Heart left ventricle (tissue), 16 donors: ENCODE measurements at regions of chr16 and their contacts with region 1.

Region 1: GRCh38 chr16:72124761-72125634 is 31.4 kb downstream of the DHX38 start:
- DNase-seq: peak; percentile 57 to 76 (median 70)
- ATAC-seq: peak; percentile 32 to 86 (median 84)
- H3K4me3 ChIP-seq: peak overlapping the region in 1 of 12 donors; percentile 27
- H3K27ac ChIP-seq: peak overlapping the region in 3 of 12 donors; percentile 22 to 80 (median 25)
- H3K4me1 ChIP-seq: peaks cover 0 to 22% (median 0%) of the 10 kb centered on the region in 12 donors
- H3K27me3 ChIP-seq: peaks cover 0 to 8% (median 0%) of the 10 kb centered on the region in 9 donors
- CTCF ChIP-seq: peak; percentile 59 to 84 (median 70)
- POLR2A ChIP-seq: no peak

Region 2: DNA sequence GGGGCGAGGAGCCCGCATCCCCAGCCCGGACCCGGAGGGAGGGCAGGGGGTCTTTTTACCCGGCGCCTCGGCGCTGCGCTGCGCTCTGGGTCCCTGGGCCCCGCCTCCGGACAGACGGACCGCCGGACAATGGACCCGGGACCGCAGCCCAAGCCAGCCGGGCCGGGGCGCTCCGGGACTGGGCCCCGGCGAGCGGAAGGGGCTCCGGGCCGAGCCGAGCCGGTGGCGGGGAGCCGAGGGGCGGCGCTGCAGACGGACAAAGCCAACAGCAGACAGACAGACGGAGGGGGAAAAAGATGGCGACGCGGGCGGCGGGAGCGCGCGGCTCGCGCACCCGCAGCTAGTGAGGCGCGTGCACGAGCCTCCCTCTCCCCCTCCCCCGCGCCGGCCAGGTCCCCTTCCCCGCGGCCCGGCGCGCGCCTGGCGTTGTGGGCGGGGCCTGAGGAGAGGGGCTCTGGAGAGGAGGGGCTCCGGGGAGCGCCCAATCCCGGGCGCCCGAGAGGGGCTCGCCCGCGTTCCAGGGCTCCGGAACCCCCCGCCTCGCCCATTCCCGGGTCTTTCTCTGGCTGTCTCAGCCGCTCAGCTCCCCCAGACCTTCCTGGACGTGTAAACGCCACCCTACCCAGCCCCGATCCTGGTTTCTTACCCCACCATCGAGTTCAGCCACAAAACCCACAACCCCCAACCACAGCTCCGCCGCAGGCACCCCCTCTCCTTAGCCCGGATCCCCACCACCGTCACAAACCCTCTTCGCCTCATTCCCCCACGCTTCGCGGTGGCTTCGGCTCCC is 241.0 kb before region 1 on chr16 and contains the start of gene ZNF821:
- intact Hi-C with region 1: no loop called
- DNase-seq: peak; percentile 81 to 90 (median 82)
- ATAC-seq: peak; percentile 71 to 94 (median 90)
- H3K4me3 ChIP-seq: peak within 1 kb of the TSS; percentile 67 to 100 (median 94)
- H3K27ac ChIP-seq: peak within 1 kb of the TSS; percentile 72 to 96 (median 90)
- H3K4me1 ChIP-seq: peaks cover 0 to 45% (median 11%) of the 10 kb centered on the region in 12 donors
- H3K27me3 ChIP-seq: no peaks in the 10 kb centered on the region
- CTCF ChIP-seq: peak in 11 of 12 donors; percentile 7 to 70 (median 40)
- POLR2A ChIP-seq: peak in 1 of 2 donors; percentile 46
- total RNA-seq, gene ZNF821: 2.3 to 5.7 (median 3.9) TPM

Region 3: GRCh38 chr16:72066747-72067146 is 58.3 kb before region 1 on chr16:
- intact Hi-C with region 1: loop called in 1 of 10 experiments (anchors 10 kb)
- DNase-seq: no peak
- ATAC-seq: peak; percentile 44 to 70 (median 58)
- H3K4me3 ChIP-seq: no peak overlapping the region
- H3K27ac ChIP-seq: no peak overlapping the region
- H3K4me1 ChIP-seq: peaks cover 0 to 6% (median 0%) of the 10 kb centered on the region in 12 donors
- H3K27me3 ChIP-seq: no peaks in the 10 kb centered on the region
- CTCF ChIP-seq: peak; percentile 38 to 67 (median 54)
- POLR2A ChIP-seq: no peak

Region 4: DNA sequence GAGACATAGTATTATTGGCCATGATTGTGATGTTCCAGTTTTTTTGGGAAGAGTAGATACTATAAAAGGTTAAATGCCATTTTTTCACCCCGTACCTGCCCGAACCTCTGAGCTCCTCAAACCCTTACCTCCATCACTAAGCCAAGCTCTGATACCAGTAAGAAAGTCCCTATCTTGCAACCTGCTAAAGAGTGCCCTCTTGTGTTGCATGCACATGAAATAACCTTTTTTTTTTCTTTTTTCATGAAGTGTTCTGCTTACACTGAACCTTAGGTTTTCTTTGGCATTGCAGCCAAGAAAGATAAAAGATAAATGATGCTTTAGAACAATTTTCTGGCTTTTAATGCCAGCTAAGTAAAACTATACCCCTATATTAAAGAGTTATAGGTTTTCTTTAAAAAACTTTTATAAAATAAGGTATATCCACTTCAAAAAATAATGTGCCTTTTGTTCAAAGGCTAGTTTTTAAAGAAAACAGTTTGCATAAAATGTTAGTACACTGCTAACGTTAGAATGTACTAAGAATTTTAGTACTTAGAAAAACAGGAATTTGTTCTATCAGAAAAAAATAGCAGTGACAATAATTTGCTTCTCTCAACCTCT is 342.3 kb after region 1 on chr16:
- intact Hi-C with region 1: loop called in 8 of 10 experiments (anchors 5 to 10 kb)
- DNase-seq: no peak
- ATAC-seq: no peak
- H3K4me3 ChIP-seq: no peak overlapping the region
- H3K27ac ChIP-seq: no peak overlapping the region
- H3K4me1 ChIP-seq: no peaks in the 10 kb centered on the region
- H3K27me3 ChIP-seq: no peaks in the 10 kb centered on the region
- CTCF ChIP-seq: peak in 10 of 12 donors; percentile 17 to 51 (median 32)
- POLR2A ChIP-seq: no peak

Region 5: GRCh38 chr16:73949574-73950320 is 1824.7 kb after region 1 on chr16:
- intact Hi-C with region 1: loop called in 3 of 10 experiments (anchors 5 to 10 kb)
- DNase-seq: no peak
- ATAC-seq: peak; percentile 19 to 76 (median 72)
- H3K4me3 ChIP-seq: no peak overlapping the region
- H3K27ac ChIP-seq: peak overlapping the region in 7 of 12 donors; percentile 0 to 57 (median 41)
- H3K4me1 ChIP-seq: peaks cover 0 to 7% (median 0%) of the 10 kb centered on the region in 12 donors
- H3K27me3 ChIP-seq: peaks cover 0 to 4% (median 0%) of the 10 kb centered on the region in 9 donors
- CTCF ChIP-seq: no peak
- POLR2A ChIP-seq: no peak

Region 6: GRCh38 chr16:73956587-73957494 is 1831.8 kb after region 1 on chr16:
- intact Hi-C with region 1: loop called in 4 of 10 experiments (anchors 5 to 10 kb)
- DNase-seq: peak in 4 of 5 donors; percentile 34 to 48 (median 46)
- ATAC-seq: peak in 1 of 4 donors; percentile 66
- H3K4me3 ChIP-seq: no peak overlapping the region
- H3K27ac ChIP-seq: no peak overlapping the region
- H3K4me1 ChIP-seq: peaks cover 0 to 5% (median 0%) of the 10 kb centered on the region in 12 donors
- H3K27me3 ChIP-seq: peaks cover 0 to 5% (median 0%) of the 10 kb centered on the region in 9 donors
- CTCF ChIP-seq: peak; percentile 73 to 89 (median 81)
- POLR2A ChIP-seq: no peak